GM10248 (cell line): ENCODE measurements at regions of chr1 and their contacts with region 1.

Region 1: GRCh38 chr1:210400043-210400840 is 71.5 kb downstream of the HHAT start:
- DNase-seq: peak; percentile 68
- CTCF ChIP-seq: peak; percentile 68

Region 2: DNA sequence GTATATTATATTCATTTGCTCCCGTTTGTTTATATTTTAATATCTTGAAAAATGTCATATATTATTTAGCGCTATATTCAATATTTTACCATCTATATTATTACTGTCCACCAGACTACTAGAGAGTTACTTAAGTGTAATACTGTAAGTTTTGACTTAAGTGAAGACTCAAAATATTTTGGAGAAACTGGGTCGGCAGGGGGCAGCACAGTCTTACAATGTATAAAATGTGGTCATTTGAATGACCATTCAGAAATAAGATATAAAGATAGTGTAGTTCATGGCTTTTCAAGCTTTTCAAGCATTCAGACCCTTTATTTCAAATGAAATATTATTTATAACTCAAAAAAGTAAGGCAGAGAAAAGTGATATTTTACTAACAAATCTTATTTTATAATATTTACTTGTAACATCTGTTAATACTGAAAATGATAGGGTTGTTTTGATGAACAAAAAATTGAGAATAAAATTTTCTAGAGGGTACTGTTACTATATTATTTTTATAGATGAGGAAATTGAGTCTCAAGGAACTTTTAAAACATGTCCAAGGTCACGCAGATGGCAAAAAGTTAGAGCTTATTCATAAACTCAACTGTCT is 256.7 kb before region 1 on chr1:
- CTCF ChIA-PET with region 1: interaction called, 33 read pairs
- POLR2A ChIA-PET with region 1: no interaction called
- DNase-seq: peak; percentile 34
- CTCF ChIP-seq: peak; percentile 65

Region 3: GRCh38 chr1:210415846-210416448 is 15.7 kb after region 1 on chr1:
- CTCF ChIA-PET with region 1: interaction called, 44 read pairs
- POLR2A ChIA-PET with region 1: no interaction called
- DNase-seq: no peak
- CTCF ChIP-seq: no peak

Region 4: GRCh38 chr1:210536254-210536961 is 136.2 kb after region 1 on chr1:
- CTCF ChIA-PET with region 1: no interaction called
- POLR2A ChIA-PET with region 1: no interaction called
- DNase-seq: no peak
- CTCF ChIP-seq: no peak

Region 5: GRCh38 chr1:210866532-210866931 is 466.3 kb after region 1 on chr1:
- CTCF ChIA-PET with region 1: no interaction called
- POLR2A ChIA-PET with region 1: no interaction called
- DNase-seq: no peak
- CTCF ChIP-seq: no peak